A673 (cell line): ENCODE measurements at regions of chr13 and their contacts with region 1.

Region 1: DNA sequence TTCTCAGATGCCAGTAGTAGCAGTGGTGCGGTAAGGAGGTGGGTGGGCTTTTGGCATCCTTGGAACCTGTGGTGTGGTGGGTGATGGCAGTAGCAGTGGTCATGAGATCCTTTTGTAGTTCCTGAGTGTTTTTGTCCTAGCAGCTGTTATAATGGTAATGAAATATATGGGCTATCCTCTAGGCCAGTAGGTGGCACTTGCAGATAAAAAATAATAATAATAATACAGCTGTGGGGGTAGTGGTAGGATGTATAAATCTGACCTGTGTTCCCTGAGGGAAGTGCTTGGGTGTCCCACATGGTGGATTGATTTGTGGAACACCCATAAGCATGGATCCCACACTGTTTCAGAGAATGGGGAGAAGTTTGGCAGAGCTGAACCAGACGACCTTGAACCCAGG is 334.0 kb downstream of the SLITRK5 start:
- DNase-seq: peak; percentile 37
- H3K4me3 ChIP-seq: no peak overlapping the region
- H3K27ac ChIP-seq: no peak overlapping the region
- H3K4me1 ChIP-seq: no peaks in the 10 kb centered on the region
- H3K27me3 ChIP-seq: no peaks in the 10 kb centered on the region
- CTCF ChIP-seq: peak; percentile 43; the same call in 1 of the 2 replicates

Region 2: GRCh38 chr13:88051746-88052482 is 46.7 kb after region 1 on chr13:
- CTCF ChIA-PET with region 1: no interaction called
- POLR2A ChIA-PET with region 1: no interaction called
- intact Hi-C with region 1: no loop called
- DNase-seq: no peak
- H3K4me3 ChIP-seq: no peak overlapping the region
- H3K27ac ChIP-seq: no peak overlapping the region
- H3K4me1 ChIP-seq: no peaks in the 10 kb centered on the region
- H3K27me3 ChIP-seq: no peaks in the 10 kb centered on the region
- CTCF ChIP-seq: no peak

Region 3: GRCh38 chr13:88153353-88153752 is 148.2 kb after region 1 on chr13:
- CTCF ChIA-PET with region 1: no interaction called
- POLR2A ChIA-PET with region 1: no interaction called
- intact Hi-C with region 1: no loop called
- DNase-seq: no peak
- H3K4me3 ChIP-seq: no peak overlapping the region
- H3K27ac ChIP-seq: no peak overlapping the region
- H3K4me1 ChIP-seq: no peaks in the 10 kb centered on the region
- H3K27me3 ChIP-seq: no peaks in the 10 kb centered on the region
- CTCF ChIP-seq: no peak

Region 4: GRCh38 chr13:89066868-89067466 is 1061.8 kb after region 1 on chr13:
- CTCF ChIA-PET with region 1: no interaction called
- POLR2A ChIA-PET with region 1: no interaction called
- intact Hi-C with region 1: loop called (anchors 2 kb)
- DNase-seq: peak; percentile 70
- H3K4me3 ChIP-seq: no peak overlapping the region
- H3K27ac ChIP-seq: no peak overlapping the region
- H3K4me1 ChIP-seq: no peaks in the 10 kb centered on the region
- H3K27me3 ChIP-seq: no peaks in the 10 kb centered on the region
- CTCF ChIP-seq: peak; percentile 75